Activated naive CD4-positive, alpha-beta T cell treated with anti-CD3 and anti-CD28 coated beads for 36 hours (primary cell): ENCODE measurements at regions of chr15 and their contacts with region 1.

Region 1: DNA sequence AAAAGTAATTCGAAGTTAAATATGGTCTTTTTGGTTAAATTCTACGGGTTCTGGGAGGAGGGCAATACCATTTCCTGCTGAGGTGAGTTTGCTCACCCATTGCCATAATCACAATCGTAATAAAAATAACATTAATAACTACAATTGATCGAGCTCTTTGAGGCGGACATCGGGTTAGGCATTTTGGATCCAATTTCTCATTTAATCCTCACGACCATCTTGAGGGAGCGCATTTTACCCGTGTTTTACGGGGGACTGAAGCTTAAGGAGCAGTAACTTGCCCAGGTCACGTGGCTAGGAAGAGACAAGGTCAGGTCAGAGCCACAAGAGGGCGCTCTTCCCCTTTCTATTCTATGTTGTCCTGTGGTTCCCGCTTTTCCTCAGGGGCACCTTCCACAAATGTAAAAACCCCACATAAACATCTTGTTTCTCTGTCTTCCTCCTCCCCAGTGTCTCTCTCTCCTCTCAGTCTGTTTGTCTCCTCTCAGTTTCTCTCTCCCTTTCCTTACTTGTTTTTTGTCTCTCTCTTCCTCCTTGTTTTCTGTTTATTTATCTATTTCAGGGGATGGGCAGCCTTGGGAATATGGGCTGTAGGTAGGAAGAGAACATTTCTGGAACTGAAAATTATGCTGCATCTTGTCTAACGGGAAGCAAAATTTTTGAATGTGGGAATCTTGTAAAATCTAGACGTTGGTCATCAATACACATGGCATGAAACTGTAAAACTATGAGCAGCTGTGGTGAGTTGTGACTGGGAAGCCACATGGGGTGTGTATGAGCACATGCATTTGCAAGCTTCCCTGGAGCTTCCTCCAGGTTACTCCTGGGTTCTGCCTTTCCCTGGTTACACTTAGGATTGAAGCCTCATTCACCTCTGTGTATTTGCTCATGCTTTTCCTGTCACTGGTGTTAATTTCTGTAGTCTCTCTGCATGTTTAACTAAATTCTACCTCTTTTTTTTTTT is 71.0 kb downstream of the SQOR start:
- DNase-seq: peak; percentile 79
- H3K4me3 Mint-ChIP-seq: peak overlapping the region; percentile 77
- H3K27ac Mint-ChIP-seq: peak overlapping the region; percentile 48
- H3K4me1 Mint-ChIP-seq: peaks cover 11% of the 10 kb centered on the region
- H3K27me3 Mint-ChIP-seq: peaks cover 3% of the 10 kb centered on the region

Region 2: DNA sequence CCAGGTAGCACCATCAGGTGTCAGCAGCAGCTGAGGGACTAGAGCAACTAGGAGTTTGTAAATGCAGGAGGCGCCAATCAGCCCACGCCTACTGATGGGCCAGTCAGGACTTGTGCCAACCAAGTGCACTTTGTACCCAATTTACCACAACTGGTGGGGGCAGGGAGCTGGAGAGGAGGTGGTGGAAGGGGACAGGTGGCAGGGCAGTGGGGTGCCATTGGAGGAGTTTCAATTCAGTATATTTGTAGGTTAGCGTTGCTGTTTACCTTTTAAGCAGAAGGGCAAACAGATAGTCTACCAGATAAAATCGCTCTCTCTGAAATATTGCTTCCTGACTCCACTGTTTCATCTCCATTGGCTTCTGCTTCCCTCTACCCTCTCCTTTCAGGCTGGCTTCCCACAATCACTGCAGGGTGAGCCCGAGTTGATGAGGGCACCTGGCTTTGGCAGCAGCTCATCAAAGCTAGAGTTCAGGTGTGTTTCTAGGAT is 893.7 kb before region 1 on chr15:
- CTCF ChIA-PET with region 1: no interaction called
- intact Hi-C with region 1: no loop called
- DNase-seq: no peak
- H3K4me3 Mint-ChIP-seq: no peak overlapping the region
- H3K27ac Mint-ChIP-seq: no peak overlapping the region
- H3K4me1 Mint-ChIP-seq: peaks cover 2% of the 10 kb centered on the region
- H3K27me3 Mint-ChIP-seq: no peaks in the 10 kb centered on the region

Region 3: GRCh38 chr15:45587095-45587860 is 118.5 kb before region 1 on chr15 and contains the start of gene BLOC1S6:
- CTCF ChIA-PET with region 1: interaction called, 3 read pairs
- intact Hi-C with region 1: loop called (anchors 1 kb)
- DNase-seq: peak; percentile 91
- H3K4me3 Mint-ChIP-seq: peak within 1 kb of the TSS; percentile 100
- H3K27ac Mint-ChIP-seq: peak within 1 kb of the TSS; percentile 100
- H3K4me1 Mint-ChIP-seq: peaks cover 41% of the 10 kb centered on the region
- H3K27me3 Mint-ChIP-seq: no peaks in the 10 kb centered on the region
- total RNA-seq, gene BLOC1S6: 36.8 to 42.8 TPM

Region 4: DNA sequence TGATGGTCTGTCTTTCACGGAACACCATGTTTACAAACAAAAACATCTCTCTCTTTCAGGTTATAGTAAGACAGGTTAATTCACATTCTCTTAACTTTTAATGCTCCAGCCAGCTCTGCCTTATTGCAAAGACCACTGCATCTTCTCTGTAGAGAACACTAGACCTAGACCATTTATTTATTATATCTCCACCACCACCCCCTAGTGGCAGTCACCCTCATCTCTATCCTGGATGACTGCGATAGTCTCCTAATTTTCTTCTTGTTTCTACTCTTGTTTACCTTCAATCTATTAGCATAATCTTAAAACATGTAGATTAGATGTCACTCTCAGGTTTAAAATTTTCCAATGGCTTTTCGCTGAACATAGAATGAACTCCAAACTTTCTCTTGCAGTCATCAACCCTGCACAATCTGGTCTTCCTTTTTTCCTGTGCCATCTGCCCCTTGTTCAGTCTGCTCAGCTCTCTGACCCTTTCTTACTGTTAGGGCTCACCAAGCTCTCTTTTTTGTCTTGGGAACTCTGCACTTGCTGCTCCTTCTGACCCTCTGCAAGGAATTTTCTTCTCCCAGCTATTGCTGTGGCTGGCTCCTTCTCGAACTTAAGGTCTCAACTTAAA is 84.6 kb after region 1 on chr15:
- CTCF ChIA-PET with region 1: interaction called, 15 read pairs
- intact Hi-C with region 1: loop called (anchors 1 kb)
- DNase-seq: peak; percentile 47
- H3K4me3 Mint-ChIP-seq: no peak overlapping the region
- H3K27ac Mint-ChIP-seq: no peak overlapping the region
- H3K4me1 Mint-ChIP-seq: no peaks in the 10 kb centered on the region
- H3K27me3 Mint-ChIP-seq: peaks cover 10% of the 10 kb centered on the region

Region 5: GRCh38 chr15:46312133-46312740 is 606.4 kb after region 1 on chr15:
- CTCF ChIA-PET with region 1: interaction called, 6 read pairs
- intact Hi-C with region 1: loop called (anchors 5 kb)
- DNase-seq: peak; percentile 78
- H3K4me3 Mint-ChIP-seq: no peak overlapping the region
- H3K27ac Mint-ChIP-seq: no peak overlapping the region
- H3K4me1 Mint-ChIP-seq: no peaks in the 10 kb centered on the region
- H3K27me3 Mint-ChIP-seq: no peaks in the 10 kb centered on the region